ENCODE measurements at regions of chr9 and their contacts with region 1.

Region 1: DNA sequence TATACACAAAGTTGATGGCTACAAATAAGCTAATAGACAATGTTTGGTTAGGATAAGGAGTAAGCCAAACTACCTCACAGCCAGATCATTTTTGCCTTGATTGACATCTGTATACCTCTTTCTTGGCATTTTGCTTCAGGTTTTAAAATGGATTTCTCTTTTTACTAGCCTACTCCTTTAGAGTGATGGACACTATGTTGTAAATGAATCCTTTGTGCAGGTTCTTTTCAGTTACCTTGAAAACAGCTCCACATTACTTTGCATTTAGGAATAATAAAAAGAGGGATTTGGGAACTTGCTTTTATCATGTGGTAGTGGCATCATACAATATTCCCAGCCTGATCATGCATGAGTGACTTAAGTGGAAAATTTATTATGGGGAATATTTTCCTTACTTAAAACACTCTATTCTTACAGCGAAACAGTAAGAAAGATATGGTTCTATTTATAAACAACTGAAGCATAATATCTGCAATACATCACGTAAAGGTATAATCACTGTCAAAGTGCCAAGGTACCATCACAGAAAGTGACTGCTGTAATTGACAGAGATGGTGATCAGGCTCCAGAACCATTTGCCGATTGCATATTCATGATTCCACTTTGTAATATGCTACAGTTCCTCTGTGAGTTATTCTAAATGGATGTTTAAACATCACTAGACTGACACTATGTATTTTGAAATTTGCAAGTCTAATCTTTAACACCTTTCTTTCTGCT is 327.0 kb downstream of the DMRTA1 start:
- DNase-seq: no peak
- ATAC-seq: no peak
- H3K4me3 Mint-ChIP-seq: no peak overlapping the region
- H3K27ac Mint-ChIP-seq: no peak overlapping the region
- H3K4me1 Mint-ChIP-seq: no peaks in the 10 kb centered on the region
- H3K27me3 Mint-ChIP-seq: no peaks in the 10 kb centered on the region

Region 2: GRCh38 chr9:22175972-22176545 is 597.6 kb before region 1 on chr9:
- CTCF ChIA-PET with region 1: no interaction called
- POLR2A ChIA-PET with region 1: no interaction called
- intact Hi-C with region 1: no loop called
- DNase-seq: no peak
- ATAC-seq: peak; percentile 70
- H3K4me3 Mint-ChIP-seq: no peak overlapping the region
- H3K27ac Mint-ChIP-seq: no peak overlapping the region
- H3K4me1 Mint-ChIP-seq: peaks cover 8% of the 10 kb centered on the region
- H3K27me3 Mint-ChIP-seq: peaks cover 22% of the 10 kb centered on the region

Region 3: GRCh38 chr9:22189471-22189870 is 584.2 kb before region 1 on chr9:
- CTCF ChIA-PET with region 1: no interaction called
- POLR2A ChIA-PET with region 1: no interaction called
- intact Hi-C with region 1: loop called in 1 of 2 experiments (anchors 5 kb)
- DNase-seq: no peak
- ATAC-seq: no peak
- H3K4me3 Mint-ChIP-seq: no peak overlapping the region
- H3K27ac Mint-ChIP-seq: no peak overlapping the region
- H3K4me1 Mint-ChIP-seq: no peaks in the 10 kb centered on the region
- H3K27me3 Mint-ChIP-seq: peaks cover 16% of the 10 kb centered on the region

Region 4: DNA sequence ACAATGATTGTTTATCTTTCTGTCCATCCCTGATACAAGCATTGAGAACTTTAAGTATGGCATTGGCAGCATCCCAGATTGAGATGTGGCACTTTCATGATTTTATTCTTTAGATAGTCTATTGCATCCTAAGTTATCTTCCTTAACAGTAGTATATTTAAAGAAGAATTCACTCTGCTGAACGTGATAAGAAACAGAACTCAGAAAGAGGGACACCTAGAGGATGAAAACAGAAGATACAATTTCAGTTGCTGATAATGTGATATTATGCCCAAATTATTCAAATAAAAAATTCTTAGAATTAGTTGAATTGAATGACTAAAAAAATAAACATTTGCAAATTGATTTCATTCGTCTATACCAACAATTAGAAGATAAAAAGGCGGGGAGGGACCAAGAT is 545.1 kb before region 1 on chr9:
- CTCF ChIA-PET with region 1: no interaction called
- POLR2A ChIA-PET with region 1: no interaction called
- intact Hi-C with region 1: no loop called
- DNase-seq: no peak
- ATAC-seq: no peak
- H3K4me3 Mint-ChIP-seq: no peak overlapping the region
- H3K27ac Mint-ChIP-seq: no peak overlapping the region
- H3K4me1 Mint-ChIP-seq: no peaks in the 10 kb centered on the region
- H3K27me3 Mint-ChIP-seq: peaks cover 27% of the 10 kb centered on the region

Region 5: DNA sequence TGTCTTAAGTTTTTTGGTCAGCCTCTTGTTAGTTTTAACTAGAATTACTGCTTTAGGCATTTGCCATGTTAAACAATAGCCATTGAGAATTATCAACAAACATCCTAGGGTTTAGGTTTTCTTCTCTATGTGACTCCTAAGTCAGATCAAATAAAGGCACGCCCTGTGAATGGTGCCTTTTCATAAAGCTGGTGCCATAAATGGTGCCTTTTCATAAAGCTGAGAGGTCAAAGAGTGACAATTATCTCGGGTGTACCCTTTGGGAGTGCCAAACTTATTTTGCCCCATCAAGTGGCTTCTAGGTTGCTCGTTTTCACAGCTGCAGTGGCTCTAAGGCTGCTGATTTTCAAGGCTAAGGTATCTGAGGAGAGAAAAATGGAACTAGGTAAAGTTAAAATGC is 64.6 kb after region 1 on chr9:
- CTCF ChIA-PET with region 1: no interaction called
- POLR2A ChIA-PET with region 1: no interaction called
- intact Hi-C with region 1: no loop called
- DNase-seq: no peak
- ATAC-seq: no peak
- H3K4me3 Mint-ChIP-seq: no peak overlapping the region
- H3K27ac Mint-ChIP-seq: no peak overlapping the region
- H3K4me1 Mint-ChIP-seq: no peaks in the 10 kb centered on the region
- H3K27me3 Mint-ChIP-seq: no peaks in the 10 kb centered on the region